ENCODE measurements at regions of chr14 and their contacts with region 1.

Region 1: GRCh38 chr14:105974902-105975301 is 448.5 kb downstream of the TMEM121 start:
- DNase-seq: peak in 8 of 9 donors; percentile 31 to 59 (median 46)
- ATAC-seq: peak; percentile 73
- H3K4me3 ChIP-seq: no peak overlapping the region
- H3K4me3 Mint-ChIP-seq: peak overlapping the region in 1 of 10 donors; percentile 21
- H3K27ac ChIP-seq: no peak overlapping the region
- H3K27ac Mint-ChIP-seq: peak overlapping the region in 4 of 9 donors; percentile 12 to 76 (median 44)
- H3K4me1 ChIP-seq: peaks cover 10 to 11% of the 10 kb centered on the region in 2 donors
- H3K4me1 Mint-ChIP-seq: peaks cover 0 to 11% (median 8%) of the 10 kb centered on the region in 7 donors
- H3K27me3 ChIP-seq: peaks cover 0 to 10% of the 10 kb centered on the region in 2 donors
- H3K27me3 Mint-ChIP-seq: peaks cover 0 to 8% (median 0%) of the 10 kb centered on the region in 5 donors

Region 2: DNA sequence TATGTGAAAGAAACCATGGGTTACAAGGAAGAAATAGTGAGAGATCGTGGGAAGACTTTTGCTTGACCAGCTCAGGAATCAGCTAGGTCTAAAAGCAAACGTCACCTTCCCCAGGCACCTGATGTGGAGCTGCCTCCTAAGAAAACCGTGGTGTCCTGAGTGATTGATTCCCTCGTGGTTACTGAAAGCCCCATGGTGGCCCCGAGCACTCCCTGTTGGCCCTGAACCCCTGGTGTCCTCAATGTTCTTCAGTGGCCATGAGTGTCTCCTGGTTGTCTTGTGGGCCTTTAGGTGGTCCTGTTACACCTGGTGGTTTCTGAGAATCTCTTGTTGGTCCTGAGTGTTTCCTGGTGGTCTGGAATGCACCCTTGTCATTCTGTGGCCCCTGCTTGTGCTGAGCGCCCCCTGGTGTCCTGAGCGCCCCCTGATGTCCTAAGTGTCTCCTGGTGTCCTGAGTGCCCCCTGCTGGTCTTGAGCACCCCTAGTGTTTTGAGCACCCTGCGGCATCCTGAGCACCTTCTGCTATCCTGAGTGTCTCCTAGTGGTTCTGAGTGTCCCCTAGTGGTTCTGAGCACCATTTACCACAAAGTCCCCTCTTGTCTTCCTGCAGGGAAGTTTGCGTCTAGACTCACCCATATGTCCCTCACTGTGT is 70.2 kb after region 1 on chr14:
- CTCF ChIA-PET with region 1: interaction called, 3 read pairs
- POLR2A ChIA-PET with region 1: no interaction called
- intact Hi-C with region 1: loop called in 1 of 2 experiments (anchors 1 kb)
- DNase-seq: peak; percentile 56 to 78 (median 74)
- ATAC-seq: peak; percentile 98
- H3K4me3 ChIP-seq: no peak overlapping the region
- H3K4me3 Mint-ChIP-seq: no peak overlapping the region
- H3K27ac ChIP-seq: no peak overlapping the region
- H3K27ac Mint-ChIP-seq: peak overlapping the region in 1 of 9 donors; percentile 76
- H3K4me1 ChIP-seq: no peaks in the 10 kb centered on the region
- H3K4me1 Mint-ChIP-seq: peaks cover 0 to 6% (median 0%) of the 10 kb centered on the region in 7 donors
- H3K27me3 ChIP-seq: no peaks in the 10 kb centered on the region
- H3K27me3 Mint-ChIP-seq: peaks cover 0 to 8% (median 0%) of the 10 kb centered on the region in 5 donors